ENCODE measurements at regions of chr2 and their contacts with region 1.

Region 1: DNA sequence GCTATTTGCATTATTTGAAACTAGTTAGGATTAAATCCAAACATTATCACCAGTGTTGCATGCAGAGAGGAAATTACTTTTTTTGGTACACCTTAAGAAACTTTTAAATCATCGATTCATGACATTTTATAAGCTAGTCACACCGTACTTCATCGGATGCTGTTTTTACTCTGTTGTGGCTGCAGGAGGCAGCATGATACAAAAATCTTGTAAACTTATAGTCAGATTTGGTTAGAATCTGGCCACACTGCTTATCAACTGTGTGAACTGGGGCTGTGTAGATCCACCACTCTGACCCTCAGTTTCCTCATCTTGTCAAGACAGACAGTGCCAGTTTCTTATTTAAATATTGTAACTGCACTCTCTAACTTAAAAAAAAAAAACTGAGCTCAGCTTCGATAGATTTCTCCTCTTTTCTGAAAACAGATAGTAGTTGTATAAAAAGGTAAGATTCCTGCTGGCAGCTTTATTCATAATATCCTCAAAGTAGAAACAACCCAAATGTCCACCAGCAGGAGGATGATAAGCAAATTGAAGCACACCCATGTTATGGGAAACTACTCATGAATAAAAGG is 77.8 kb downstream of the RAPGEF4 start:
- H3K4me3 ChIP-seq: no peak overlapping the region
- H3K27ac ChIP-seq: no peak overlapping the region
- H3K4me1 ChIP-seq: 0 out of 2 replicates have a peak, but pooled peaks cover 3% of the 10 kb centered on the region
- CTCF ChIP-seq: no peak

Region 2: GRCh38 chr2:172456002-172456401 is 357.4 kb before region 1 on chr2:
- CTCF ChIA-PET with region 1: no interaction called
- POLR2A ChIA-PET with region 1: no interaction called
- H3K4me3 ChIP-seq: no peak overlapping the region
- H3K27ac ChIP-seq: no peak overlapping the region
- H3K4me1 ChIP-seq: no peaks in the 10 kb centered on the region
- CTCF ChIP-seq: no peak

Region 3: GRCh38 chr2:172829229-172829628 is 15.8 kb after region 1 on chr2:
- CTCF ChIA-PET with region 1: interaction called, 10 read pairs
- POLR2A ChIA-PET with region 1: no interaction called
- H3K4me3 ChIP-seq: no peak overlapping the region
- H3K27ac ChIP-seq: no peak overlapping the region
- H3K4me1 ChIP-seq: no peaks in the 10 kb centered on the region
- CTCF ChIP-seq: no peak

Region 4: GRCh38 chr2:172845028-172845630 is 31.7 kb after region 1 on chr2:
- CTCF ChIA-PET with region 1: no interaction called
- POLR2A ChIA-PET with region 1: no interaction called
- H3K4me3 ChIP-seq: no peak overlapping the region
- H3K27ac ChIP-seq: no peak overlapping the region
- H3K4me1 ChIP-seq: no peaks in the 10 kb centered on the region; the same call in none of the 2 replicates
- CTCF ChIP-seq: no peak

Region 5: GRCh38 chr2:172856606-172857005 is 43.2 kb after region 1 on chr2:
- CTCF ChIA-PET with region 1: interaction called, 19 read pairs
- POLR2A ChIA-PET with region 1: no interaction called
- H3K4me3 ChIP-seq: no peak overlapping the region
- H3K27ac ChIP-seq: no peak overlapping the region
- H3K4me1 ChIP-seq: peaks cover 17% of the 10 kb centered on the region
- CTCF ChIP-seq: no peak

Region 6: DNA sequence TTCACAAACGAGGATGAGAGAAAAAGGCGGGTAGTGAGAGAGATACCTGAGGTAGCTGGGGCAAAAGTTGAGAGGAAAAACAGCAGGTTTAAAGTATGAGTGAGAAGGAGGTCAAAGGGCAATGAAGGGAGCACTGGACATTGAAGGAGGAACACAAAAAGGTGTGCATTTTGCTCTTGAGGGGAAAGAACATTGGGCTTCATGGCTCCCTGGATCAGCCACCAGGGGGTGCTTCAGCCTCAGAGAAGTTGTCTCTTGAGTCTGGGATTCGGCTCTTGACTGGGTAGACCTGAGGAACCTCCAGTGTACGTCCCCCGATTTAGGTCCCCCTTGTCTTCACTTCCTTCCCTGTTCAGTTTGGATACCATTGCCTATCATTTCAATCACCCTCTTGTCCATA is 50.8 kb after region 1 on chr2:
- CTCF ChIA-PET with region 1: interaction called, 16 read pairs
- POLR2A ChIA-PET with region 1: no interaction called
- H3K4me3 ChIP-seq: no peak overlapping the region
- H3K27ac ChIP-seq: no peak overlapping the region
- H3K4me1 ChIP-seq: peaks cover 9% of the 10 kb centered on the region
- CTCF ChIP-seq: peak; percentile 72